Caco-2 (cell line): ENCODE measurements at regions of chr6 and their contacts with region 1.

Region 1: GRCh38 chr6:139540276-139540675 is 165.8 kb upstream of the CITED2 start:
- DNase-seq: no peak
- H3K4me3 ChIP-seq: no peak overlapping the region
- H3K4me3 Mint-ChIP-seq: peak overlapping the region; percentile 57
- H3K27ac Mint-ChIP-seq: peak overlapping the region; percentile 68
- H3K4me1 ChIP-seq: peaks cover 45% of the 10 kb centered on the region
- H3K4me1 Mint-ChIP-seq: peaks cover 29% of the 10 kb centered on the region
- H3K27me3 ChIP-seq: no peaks in the 10 kb centered on the region
- H3K27me3 Mint-ChIP-seq: no peaks in the 10 kb centered on the region
- CTCF ChIP-seq: no peak

Region 2: GRCh38 chr6:139846538-139847456 is 306.5 kb after region 1 on chr6:
- CTCF ChIA-PET with region 1: no interaction called
- POLR2A ChIA-PET with region 1: no interaction called
- intact Hi-C with region 1: loop called (anchors 5 kb)
- DNase-seq: peak; percentile 62 to 65
- H3K4me3 ChIP-seq: no peak overlapping the region
- H3K4me3 Mint-ChIP-seq: peak overlapping the region; percentile 8
- H3K27ac Mint-ChIP-seq: peak overlapping the region; percentile 29
- H3K4me1 ChIP-seq: peaks cover 27% of the 10 kb centered on the region
- H3K4me1 Mint-ChIP-seq: peaks cover 20% of the 10 kb centered on the region
- H3K27me3 ChIP-seq: no peaks in the 10 kb centered on the region
- H3K27me3 Mint-ChIP-seq: no peaks in the 10 kb centered on the region
- CTCF ChIP-seq: no peak